ENCODE measurements at regions of chr10 and their contacts with region 1.

Region 1: GRCh38 chr10:93376372-93377293 is 105.5 kb downstream of the MYOF start:
- DNase-seq: peak; percentile 46
- H3K4me3 Mint-ChIP-seq: no peak overlapping the region
- H3K27ac Mint-ChIP-seq: no peak overlapping the region
- H3K4me1 Mint-ChIP-seq: peaks cover 32% of the 10 kb centered on the region
- H3K27me3 Mint-ChIP-seq: no peaks in the 10 kb centered on the region

Region 2: DNA sequence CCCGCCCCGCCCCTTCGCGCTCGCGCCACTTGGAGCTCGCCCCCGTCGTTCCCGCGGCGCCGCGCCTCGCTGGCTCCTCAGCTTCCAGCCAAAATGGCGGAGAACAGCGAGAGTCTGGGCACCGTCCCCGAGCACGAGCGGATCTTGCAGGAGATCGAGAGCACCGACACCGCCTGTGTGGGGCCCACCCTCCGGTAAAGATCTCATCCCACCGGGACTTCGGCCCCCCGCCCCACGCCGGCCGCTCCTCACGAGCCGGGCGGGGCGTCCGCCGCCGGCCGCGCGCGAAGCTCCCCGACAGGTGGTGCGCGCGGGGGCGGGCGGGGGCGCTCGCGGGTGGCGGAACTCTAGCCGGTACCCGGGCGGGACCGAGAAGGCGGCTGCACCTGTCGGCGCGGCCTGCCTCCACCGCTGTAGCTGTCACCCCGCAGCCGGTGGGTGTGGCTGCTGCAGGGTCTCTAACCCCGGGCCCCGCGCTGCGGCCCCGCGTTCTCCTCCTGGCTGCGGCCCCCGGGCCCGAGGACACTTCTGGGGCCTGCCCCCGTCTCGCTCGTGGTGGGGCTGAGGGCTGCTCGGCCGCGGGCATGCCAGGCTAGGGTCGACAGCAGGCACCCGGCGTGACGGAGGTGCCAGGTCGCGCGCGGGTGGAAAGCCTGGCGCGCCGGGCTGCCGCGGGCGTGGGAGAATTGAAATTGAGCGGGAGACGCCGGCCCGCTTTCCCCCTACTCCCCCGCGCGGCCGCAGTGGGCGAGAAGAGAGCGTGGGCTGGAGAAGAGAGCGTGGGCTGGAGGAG is 528.0 kb before region 1 on chr10 and contains the start of gene EXOC6:
- intact Hi-C with region 1: loop called (anchors 5 kb)
- DNase-seq: peak; percentile 78
- H3K4me3 Mint-ChIP-seq: peak within 1 kb of the TSS; percentile 88
- H3K27ac Mint-ChIP-seq: peak within 1 kb of the TSS; percentile 93
- H3K4me1 Mint-ChIP-seq: peaks cover 38% of the 10 kb centered on the region
- H3K27me3 Mint-ChIP-seq: peaks cover 2% of the 10 kb centered on the region
- total RNA-seq, gene EXOC6: 13.5 TPM in 2 replicates

Region 3: GRCh38 chr10:93496322-93497041 is 119.8 kb after region 1 on chr10 and contains the start of gene CEP55:
- intact Hi-C with region 1: loop called (anchors 1 kb)
- DNase-seq: peak; percentile 96
- H3K4me3 Mint-ChIP-seq: peak within 1 kb of the TSS; percentile 88
- H3K27ac Mint-ChIP-seq: peak within 1 kb of the TSS; percentile 95
- H3K4me1 Mint-ChIP-seq: peaks cover 46% of the 10 kb centered on the region
- H3K27me3 Mint-ChIP-seq: no peaks in the 10 kb centered on the region
- total RNA-seq, gene CEP55: 53.0 and 55.7 TPM in 2 replicates

Region 4: DNA sequence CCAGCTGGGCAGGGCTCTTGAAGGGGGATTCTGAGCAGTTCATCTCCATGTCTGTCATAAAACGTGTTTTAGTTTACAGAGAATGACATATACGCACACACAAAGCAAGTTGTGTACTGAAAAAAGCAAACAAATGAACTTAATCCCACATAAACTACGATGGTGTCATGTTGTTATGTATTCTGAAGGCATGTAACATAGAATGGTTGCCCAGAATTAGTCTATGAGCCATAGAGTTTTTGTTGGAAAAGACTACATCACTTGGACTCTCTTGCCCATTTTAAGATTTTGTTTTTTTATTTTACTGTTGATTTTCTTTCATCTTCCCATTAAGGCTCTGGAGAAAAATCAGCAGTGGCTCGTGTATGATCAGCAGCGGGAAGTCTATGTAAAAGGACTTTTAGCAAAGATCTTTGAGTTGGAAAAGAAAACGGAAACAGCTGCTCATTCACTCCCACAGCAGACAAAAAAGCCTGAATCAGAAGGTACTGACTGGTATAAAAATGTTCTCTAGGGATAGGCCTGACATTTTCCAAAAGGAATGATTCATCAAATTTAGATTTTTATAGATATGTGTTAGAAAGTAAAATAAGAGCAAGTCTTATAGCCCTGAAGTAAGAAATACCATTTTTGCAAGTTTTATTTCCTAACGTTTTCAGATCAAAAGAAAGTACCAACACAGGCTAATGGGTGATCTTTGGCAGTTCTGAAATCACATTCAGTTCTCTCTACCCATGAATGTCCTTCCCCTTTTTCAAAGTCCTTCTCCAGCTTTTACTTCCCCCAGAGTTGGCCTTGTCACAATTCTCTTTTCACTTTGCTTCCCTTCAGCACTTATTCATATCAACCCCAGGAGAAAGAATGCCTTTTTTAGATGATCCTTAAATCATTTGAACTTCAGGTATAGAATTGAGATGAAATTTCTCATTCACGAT is 138.7 kb after region 1 on chr10:
- intact Hi-C with region 1: loop called (anchors 1 kb)
- DNase-seq: no peak
- H3K4me3 Mint-ChIP-seq: no peak overlapping the region
- H3K27ac Mint-ChIP-seq: no peak overlapping the region
- H3K4me1 Mint-ChIP-seq: peaks cover 4% of the 10 kb centered on the region
- H3K27me3 Mint-ChIP-seq: no peaks in the 10 kb centered on the region

Region 5: DNA sequence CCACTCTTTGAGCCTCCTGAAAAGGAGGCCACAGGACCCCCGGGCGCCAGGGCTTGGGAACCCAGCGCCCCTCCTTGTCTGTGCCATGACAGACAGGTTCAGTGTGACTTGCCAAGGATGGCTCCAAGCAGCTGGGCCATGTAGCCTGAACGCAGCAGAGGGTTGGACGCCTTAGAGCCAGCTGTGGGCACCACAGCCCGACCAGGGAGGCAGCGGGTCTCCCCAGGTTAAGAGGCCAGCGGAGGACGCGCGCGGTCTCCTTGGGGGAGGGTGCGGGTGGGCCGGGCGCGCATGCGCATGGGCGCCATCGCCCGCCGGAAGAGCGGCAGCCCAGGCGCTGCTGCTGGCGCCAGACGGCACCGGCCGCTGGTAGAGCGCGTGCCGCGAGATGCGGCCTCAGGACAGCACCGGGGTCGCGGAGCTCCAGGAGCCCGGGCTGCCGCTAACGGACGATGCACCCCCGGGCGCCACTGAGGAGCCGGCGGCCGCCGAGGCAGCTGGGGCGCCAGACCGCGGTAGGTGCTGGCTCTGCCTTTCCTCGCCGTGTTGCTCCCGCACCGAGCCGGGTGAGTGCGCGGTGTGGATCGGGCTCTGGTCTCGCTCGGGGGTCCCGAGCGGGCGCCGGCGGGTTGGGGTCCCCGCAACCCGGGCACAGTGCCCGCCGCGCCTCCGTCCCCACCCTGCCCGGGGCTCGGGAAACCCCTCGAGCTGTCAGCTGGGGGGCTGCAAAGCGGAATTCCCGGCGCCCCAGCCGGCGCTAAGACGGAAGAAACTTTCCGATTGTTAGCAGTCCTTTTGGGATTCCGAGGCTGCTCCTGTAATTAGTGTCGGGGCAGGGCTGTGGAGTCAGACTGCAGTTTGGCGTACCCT is 517.2 kb after region 1 on chr10 and contains the start of gene SLC35G1:
- intact Hi-C with region 1: loop called (anchors 2 kb)
- DNase-seq: peak; percentile 57
- H3K4me3 Mint-ChIP-seq: peak within 1 kb of the TSS; percentile 85
- H3K27ac Mint-ChIP-seq: peak within 1 kb of the TSS; percentile 57
- H3K4me1 Mint-ChIP-seq: peaks cover 40% of the 10 kb centered on the region
- H3K27me3 Mint-ChIP-seq: peaks cover 6% of the 10 kb centered on the region
- total RNA-seq, gene SLC35G1: 5.6 and 5.8 TPM in 2 replicates

Measured in activated T-helper 1 cell treated with anti-CD3 and anti-CD28 coated beads, Interleukin-12 subunit alpha, Interleukin-12 subunit beta, Interleukin-2, Interleukin-4 antibody, amounts not matched to agents 30 ng/mL and 10 ng/mL and 1 ng/mL, durations not matched to agents 14 hours and 24 hours and 36 hours (primary cell).